ENCODE measurements at regions of chr6 and their contacts with region 1.

Region 1: DNA sequence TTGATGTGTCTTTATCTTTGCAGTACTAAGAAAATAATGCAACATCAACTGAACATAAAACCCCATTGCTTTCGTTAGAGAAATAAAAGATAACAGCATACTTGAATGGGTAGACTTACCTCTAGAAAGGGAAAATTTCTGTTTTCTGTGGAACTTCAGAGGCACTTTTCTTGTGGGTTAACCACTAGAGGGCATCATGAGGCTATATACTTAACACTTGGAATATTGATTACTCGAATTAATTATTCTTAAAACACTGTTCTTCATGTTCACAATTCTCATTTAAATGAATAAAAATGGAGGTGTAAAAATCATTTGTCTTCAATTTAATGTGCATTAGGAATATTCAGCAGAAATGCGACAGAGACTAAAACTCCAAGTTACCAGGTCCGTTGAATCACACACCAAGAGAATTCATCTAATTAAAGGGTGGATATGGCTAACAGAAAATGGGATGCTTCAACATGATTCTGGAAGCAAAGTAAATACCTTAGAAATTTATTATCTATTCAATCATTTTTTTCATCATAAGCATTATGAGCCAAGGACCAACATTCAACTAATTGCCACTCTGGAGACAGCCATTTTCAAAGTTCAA is 330.8 kb upstream of the PREP start:
- DNase-seq: peak; percentile 41
- ATAC-seq: peak; percentile 58; the same call in 1 of the 2 replicates
- H3K4me3 ChIP-seq: no peak overlapping the region
- H3K27ac ChIP-seq: no peak overlapping the region
- H3K4me1 ChIP-seq: no peaks in the 10 kb centered on the region
- H3K27me3 ChIP-seq: no peaks in the 10 kb centered on the region
- CTCF ChIP-seq: peak; percentile 69 to 83 (median 80)
- POLR2A ChIP-seq: no peak
- RAD21 ChIP-seq: peak; percentile 87

Region 2: DNA sequence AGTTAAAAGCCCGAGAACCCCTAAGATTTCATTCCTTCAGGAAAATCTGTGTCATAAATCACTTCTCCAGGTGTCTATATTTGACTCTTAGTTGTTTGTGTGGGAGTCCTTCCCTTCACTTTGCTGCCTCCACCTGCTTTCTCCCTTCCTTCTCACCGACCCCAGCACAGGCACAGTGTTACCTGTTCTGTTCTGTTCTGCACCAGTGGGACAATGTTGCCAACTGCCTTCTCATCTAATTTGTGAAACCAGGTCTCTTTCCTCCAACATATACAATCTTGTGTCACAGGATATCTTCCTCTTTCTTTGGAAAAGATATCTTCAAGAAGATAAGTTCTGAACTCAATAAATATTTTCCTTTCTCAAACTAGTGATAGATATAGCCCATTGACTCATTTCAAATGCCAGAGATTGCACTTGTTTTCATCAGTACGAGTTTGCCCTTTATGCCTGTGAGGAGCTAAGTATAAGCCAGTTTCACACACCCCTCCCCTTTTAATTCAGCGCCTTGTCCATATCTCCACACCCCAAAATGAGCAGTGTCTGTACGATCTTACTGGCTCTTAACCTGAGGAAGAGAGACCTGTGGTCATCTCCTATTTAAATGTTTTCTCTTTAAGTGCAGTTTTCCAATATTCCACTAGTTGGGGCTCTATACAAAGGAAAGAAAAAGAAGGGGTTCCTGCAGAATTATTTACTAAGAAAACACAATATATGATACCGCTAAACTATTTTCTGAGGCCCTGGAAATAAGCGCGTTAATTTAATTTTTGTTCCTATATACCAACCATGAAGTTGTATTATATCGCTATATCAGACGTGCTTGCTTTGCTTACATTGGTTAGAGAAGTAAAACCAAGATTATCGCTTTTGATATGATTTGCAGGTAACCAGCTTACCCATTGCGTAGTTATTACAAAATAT is 249.2 kb before region 1 on chr6:
- CTCF ChIA-PET with region 1: no interaction called
- POLR2A ChIA-PET with region 1: no interaction called
- RAD21 ChIA-PET with region 1: no interaction called
- intact Hi-C with region 1: loop called (anchors 2 kb)
- DNase-seq: peak; percentile 42
- ATAC-seq: peak; percentile 78
- H3K4me3 ChIP-seq: no peak overlapping the region
- H3K27ac ChIP-seq: no peak overlapping the region
- H3K4me1 ChIP-seq: no peaks in the 10 kb centered on the region
- H3K27me3 ChIP-seq: no peaks in the 10 kb centered on the region
- CTCF ChIP-seq: peak; percentile 70 to 93 (median 78)
- POLR2A ChIP-seq: no peak
- RAD21 ChIP-seq: peak; percentile 88

Region 3: GRCh38 chr6:105560611-105561066 is 173.0 kb before region 1 on chr6:
- CTCF ChIA-PET with region 1: no interaction called
- POLR2A ChIA-PET with region 1: no interaction called
- RAD21 ChIA-PET with region 1: no interaction called
- intact Hi-C with region 1: no loop called
- DNase-seq: no peak
- ATAC-seq: no peak
- H3K4me3 ChIP-seq: no peak overlapping the region
- H3K27ac ChIP-seq: no peak overlapping the region
- H3K4me1 ChIP-seq: no peaks in the 10 kb centered on the region
- H3K27me3 ChIP-seq: no peaks in the 10 kb centered on the region
- CTCF ChIP-seq: no peak
- POLR2A ChIP-seq: no peak
- RAD21 ChIP-seq: no peak

Region 4: DNA sequence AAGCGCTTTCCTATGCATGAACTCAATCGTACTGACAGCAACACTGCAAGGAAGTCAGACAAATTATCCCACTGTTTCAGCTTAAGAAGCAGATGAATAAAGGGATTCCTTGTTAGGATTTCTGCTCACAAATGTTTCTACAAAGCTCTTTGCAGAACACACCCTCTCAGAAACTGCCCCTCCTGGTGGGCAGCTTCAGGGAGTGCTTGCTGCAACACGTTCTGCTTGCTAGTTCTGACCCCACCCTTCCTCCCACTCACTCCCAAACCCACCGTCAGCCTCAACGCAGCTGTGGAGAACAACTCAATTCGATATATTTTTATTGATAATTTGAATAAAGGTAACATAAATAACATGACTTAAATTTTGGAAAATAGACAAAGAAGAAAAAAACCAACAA is 101.7 kb after region 1 on chr6:
- CTCF ChIA-PET with region 1: interaction called, 3 read pairs
- POLR2A ChIA-PET with region 1: no interaction called
- RAD21 ChIA-PET with region 1: no interaction called
- intact Hi-C with region 1: loop called (anchors 5 kb)
- DNase-seq: peak; percentile 21
- ATAC-seq: peak; percentile 65; the same call in 1 of the 2 replicates
- H3K4me3 ChIP-seq: no peak overlapping the region
- H3K27ac ChIP-seq: no peak overlapping the region
- H3K4me1 ChIP-seq: no peaks in the 10 kb centered on the region
- H3K27me3 ChIP-seq: no peaks in the 10 kb centered on the region
- CTCF ChIP-seq: peak; percentile 24 to 56 (median 53); a peak in 5 of 6 replicates
- POLR2A ChIP-seq: no peak
- RAD21 ChIP-seq: peak; percentile 48

Region 5: DNA sequence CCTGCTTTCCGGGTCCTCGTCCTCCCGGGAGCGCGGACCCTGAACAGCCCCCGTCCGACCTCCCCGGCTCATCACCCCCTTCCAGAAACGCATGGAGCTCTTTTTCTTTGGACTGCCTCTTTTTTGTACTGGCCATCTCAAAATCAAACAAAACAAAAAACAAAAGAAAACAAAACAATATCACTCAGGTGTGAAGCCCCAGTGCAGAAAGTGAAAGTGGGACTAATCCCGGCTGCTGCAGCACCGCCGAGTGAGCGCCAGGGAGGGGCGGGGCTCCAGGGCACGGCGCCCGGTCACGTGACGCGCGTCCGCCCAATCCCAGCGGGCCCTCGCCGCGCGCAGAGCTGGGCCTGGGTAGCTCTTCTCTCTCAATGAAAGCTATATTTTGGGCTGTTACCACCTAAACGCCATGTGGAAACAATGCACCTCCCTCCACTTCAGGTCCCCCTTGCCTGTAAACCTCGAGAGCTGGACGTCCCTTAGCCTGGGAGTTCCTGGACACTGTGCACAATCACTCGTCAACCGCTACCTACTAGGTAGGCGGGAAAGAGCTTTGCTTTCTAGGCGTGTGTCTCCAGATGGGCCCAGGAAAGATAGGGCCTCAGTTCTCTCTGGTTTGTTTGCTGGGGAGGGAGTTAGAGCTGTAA is 258.8 kb after region 1 on chr6:
- CTCF ChIA-PET with region 1: no interaction called
- POLR2A ChIA-PET with region 1: no interaction called
- RAD21 ChIA-PET with region 1: interaction called in 1 of 2 experiments, 3 read pairs
- intact Hi-C with region 1: loop called (anchors 10 kb)
- DNase-seq: no peak
- ATAC-seq: peak; percentile 82
- H3K4me3 ChIP-seq: peak overlapping the region; percentile 47 to 60
- H3K27ac ChIP-seq: no peak overlapping the region
- H3K4me1 ChIP-seq: peaks cover 0 to 34% of the 10 kb centered on the region in 2 experiments; a peak in 2 of 4 replicates
- H3K27me3 ChIP-seq: no peaks in the 10 kb centered on the region
- CTCF ChIP-seq: no peak
- POLR2A ChIP-seq: no peak
- RAD21 ChIP-seq: no peak

Region 6: GRCh38 chr6:106223300-106223930 is 489.8 kb after region 1 on chr6:
- CTCF ChIA-PET with region 1: interaction called, 6 read pairs
- POLR2A ChIA-PET with region 1: no interaction called
- RAD21 ChIA-PET with region 1: no interaction called
- intact Hi-C with region 1: loop called (anchors 1 kb)
- DNase-seq: peak; percentile 72
- ATAC-seq: peak; percentile 85
- H3K4me3 ChIP-seq: no peak overlapping the region
- H3K27ac ChIP-seq: no peak overlapping the region
- H3K4me1 ChIP-seq: no peaks in the 10 kb centered on the region
- H3K27me3 ChIP-seq: no peaks in the 10 kb centered on the region
- CTCF ChIP-seq: peak; percentile 60 to 80 (median 62)
- POLR2A ChIP-seq: no peak
- RAD21 ChIP-seq: peak; percentile 89

Region 7: DNA sequence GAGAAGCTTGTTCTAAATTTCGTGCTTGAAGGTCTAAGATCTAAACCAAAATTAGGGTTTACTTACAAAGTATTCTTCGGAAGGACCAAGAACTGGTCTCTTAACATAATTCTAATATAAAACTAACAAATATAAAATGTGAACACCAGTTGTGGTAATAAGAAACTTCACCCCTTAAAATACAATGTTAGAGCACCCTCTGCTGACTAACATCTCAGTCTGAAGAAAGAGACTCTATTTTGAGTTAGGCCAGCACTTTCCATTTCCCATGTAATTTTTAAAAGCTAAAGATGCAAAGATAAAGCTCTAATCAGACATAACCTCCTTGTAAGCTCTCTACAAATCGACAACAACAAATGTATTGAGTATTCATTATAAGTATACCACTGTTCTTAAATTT is 567.3 kb after region 1 on chr6:
- CTCF ChIA-PET with region 1: no interaction called
- POLR2A ChIA-PET with region 1: no interaction called
- RAD21 ChIA-PET with region 1: no interaction called
- intact Hi-C with region 1: loop called (anchors 5 kb)
- DNase-seq: no peak
- ATAC-seq: peak; percentile 53; the same call in 1 of the 2 replicates
- H3K4me3 ChIP-seq: no peak overlapping the region
- H3K27ac ChIP-seq: no peak overlapping the region
- H3K4me1 ChIP-seq: peaks cover 0 to 7% of the 10 kb centered on the region in 2 experiments; a peak in 1 of 4 replicates
- H3K27me3 ChIP-seq: no peaks in the 10 kb centered on the region
- CTCF ChIP-seq: peak; percentile 42 to 51 (median 46); a peak in 5 of 6 replicates
- POLR2A ChIP-seq: no peak
- RAD21 ChIP-seq: peak; percentile 68

Measured in HCT116 (cell line).